ENCODE measurements at regions of chr6 and their contacts with region 1.

Region 1: DNA sequence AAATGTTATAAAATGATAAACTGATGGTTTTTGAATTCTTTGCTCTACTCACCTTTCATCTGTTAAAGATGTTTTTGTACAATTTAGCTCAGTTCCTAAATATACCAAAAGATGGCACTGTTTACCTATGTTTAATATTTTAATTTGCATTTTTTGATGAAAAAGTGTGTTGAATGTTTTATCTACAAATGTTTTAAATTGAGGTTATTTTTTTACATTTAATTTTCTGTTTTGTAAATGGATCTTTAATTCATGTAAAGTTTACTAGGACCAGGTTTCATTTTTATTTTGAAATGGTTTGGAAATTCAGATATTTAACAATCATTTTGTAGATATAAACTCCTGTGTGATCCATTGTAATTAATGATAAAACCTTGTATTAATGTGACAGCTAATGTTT is 30.0 kb downstream of the CDKAL1 start:
- DNase-seq: no peak
- ATAC-seq: no peak
- H3K4me3 Mint-ChIP-seq: no peak overlapping the region
- H3K27ac Mint-ChIP-seq: no peak overlapping the region
- H3K4me1 Mint-ChIP-seq: peaks cover 3% of the 10 kb centered on the region
- H3K27me3 Mint-ChIP-seq: no peaks in the 10 kb centered on the region
- CTCF ChIP-seq: peak; percentile 88

Region 2: DNA sequence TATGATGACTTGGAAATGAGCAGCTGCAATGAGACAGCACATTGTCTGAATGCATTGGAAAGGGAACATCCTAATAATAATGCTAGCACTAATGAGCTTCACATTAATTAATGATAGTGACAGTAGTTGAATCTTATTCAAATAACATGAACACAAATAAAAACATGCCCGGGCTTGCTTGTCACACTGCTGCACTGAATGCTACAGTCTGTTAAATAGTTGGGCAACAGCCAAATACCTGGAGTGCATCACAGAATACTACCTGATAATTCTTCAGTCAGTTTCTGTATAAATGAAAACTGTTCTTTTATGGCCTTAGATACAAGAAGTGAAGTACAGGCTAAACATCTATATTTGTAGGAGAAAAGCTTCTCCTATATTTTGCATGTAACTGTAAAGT is 1718.4 kb before region 1 on chr6:
- CTCF ChIA-PET with region 1: no interaction called
- POLR2A ChIA-PET with region 1: no interaction called
- intact Hi-C with region 1: no loop called
- DNase-seq: no peak
- ATAC-seq: no peak
- H3K4me3 Mint-ChIP-seq: no peak overlapping the region
- H3K27ac Mint-ChIP-seq: no peak overlapping the region
- H3K4me1 Mint-ChIP-seq: no peaks in the 10 kb centered on the region
- H3K27me3 Mint-ChIP-seq: no peaks in the 10 kb centered on the region
- CTCF ChIP-seq: no peak

Region 3: DNA sequence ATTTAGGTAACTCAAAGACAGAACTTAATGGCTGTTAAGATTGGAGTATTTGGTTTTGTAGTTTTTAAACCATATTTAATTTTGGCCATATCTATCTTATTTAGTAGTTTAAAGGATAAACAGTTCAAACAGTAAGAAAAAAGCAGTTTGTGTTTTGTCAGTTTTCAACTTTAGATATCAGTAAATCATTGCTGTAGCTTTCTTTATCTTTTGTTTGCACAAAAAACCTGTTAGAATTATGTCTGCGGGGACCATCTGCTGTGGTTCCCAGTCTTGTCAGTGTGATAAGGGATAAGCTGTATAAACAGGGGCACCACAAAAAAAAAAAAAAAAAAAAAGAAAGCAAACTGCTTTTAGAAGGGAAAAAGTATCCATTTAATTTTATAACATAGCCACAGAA is 10.9 kb after region 1 on chr6:
- CTCF ChIA-PET with region 1: interaction called, 12 read pairs
- POLR2A ChIA-PET with region 1: no interaction called
- intact Hi-C with region 1: no loop called
- DNase-seq: no peak
- ATAC-seq: no peak
- H3K4me3 Mint-ChIP-seq: no peak overlapping the region
- H3K27ac Mint-ChIP-seq: no peak overlapping the region
- H3K4me1 Mint-ChIP-seq: no peaks in the 10 kb centered on the region
- H3K27me3 Mint-ChIP-seq: no peaks in the 10 kb centered on the region
- CTCF ChIP-seq: no peak

Region 4: GRCh38 chr6:21935561-21936028 is 1371.3 kb after region 1 on chr6:
- CTCF ChIA-PET with region 1: no interaction called
- POLR2A ChIA-PET with region 1: no interaction called
- intact Hi-C with region 1: loop called (anchors 2 kb)
- DNase-seq: no peak
- ATAC-seq: no peak
- H3K4me3 Mint-ChIP-seq: no peak overlapping the region
- H3K27ac Mint-ChIP-seq: no peak overlapping the region
- H3K4me1 Mint-ChIP-seq: no peaks in the 10 kb centered on the region
- H3K27me3 Mint-ChIP-seq: no peaks in the 10 kb centered on the region
- CTCF ChIP-seq: no peak

Measured in activated B cell treated with CpG ODN at 0.5 μM for 24 hours (primary cell).